Cardiac septum (tissue), 1 donor: ENCODE measurements at regions of chr2 and their contacts with region 1.

Region 1: DNA sequence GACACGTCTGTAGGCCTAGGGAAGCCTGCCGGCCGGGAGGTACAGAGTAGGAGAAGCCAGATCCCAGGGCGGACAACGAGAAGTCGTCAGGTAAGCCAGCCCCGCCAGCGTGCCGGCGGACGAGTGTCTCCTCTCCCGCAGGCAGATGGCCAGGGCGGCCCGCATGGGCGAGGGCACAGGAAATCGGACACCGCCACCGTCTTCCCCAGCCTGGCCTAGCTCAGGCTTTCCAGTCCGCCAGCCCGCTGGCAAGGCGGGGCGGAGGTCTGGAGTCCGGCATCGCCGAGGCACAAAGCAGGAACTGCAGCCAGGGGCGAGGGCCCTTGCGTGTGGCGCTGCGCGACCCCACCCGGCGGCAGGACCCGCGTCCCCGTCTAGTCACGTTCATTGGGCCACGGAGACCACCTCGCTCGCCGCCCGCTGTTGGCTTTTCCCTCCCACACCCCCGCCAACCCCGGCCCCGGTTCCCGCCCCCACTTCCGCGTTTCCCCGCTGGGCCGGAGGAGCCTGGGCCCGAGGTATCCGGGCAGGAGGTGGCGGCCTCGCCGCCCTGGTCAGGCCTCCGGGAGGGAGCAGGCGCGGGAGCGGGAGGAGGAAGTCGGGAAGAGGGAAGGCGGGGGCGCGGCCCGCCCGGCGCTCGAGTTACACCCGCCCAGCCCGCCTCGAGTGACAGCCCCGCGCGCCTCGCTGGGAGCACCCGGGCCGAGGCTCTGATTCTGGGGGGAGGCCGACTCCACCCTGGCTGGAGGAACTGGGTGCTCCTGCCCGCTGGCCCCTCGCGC is at the start of gene GPD2:
- DNase-seq: peak; percentile 96
- total RNA-seq, gene GPD2: 12.6 TPM

Region 2: GRCh38 chr2:156332534-156333273 is 103.2 kb before region 1 on chr2 and contains the start of gene NR4A2:
- intact Hi-C with region 1: loop called (anchors 1 kb)
- DNase-seq: peak; percentile 95
- total RNA-seq, gene NR4A2: 1.1 TPM

Region 3: GRCh38 chr2:156341452-156342253 is 94.3 kb before region 1 on chr2:
- intact Hi-C with region 1: loop called (anchors 2 kb)
- DNase-seq: peak; percentile 94

Region 4: DNA sequence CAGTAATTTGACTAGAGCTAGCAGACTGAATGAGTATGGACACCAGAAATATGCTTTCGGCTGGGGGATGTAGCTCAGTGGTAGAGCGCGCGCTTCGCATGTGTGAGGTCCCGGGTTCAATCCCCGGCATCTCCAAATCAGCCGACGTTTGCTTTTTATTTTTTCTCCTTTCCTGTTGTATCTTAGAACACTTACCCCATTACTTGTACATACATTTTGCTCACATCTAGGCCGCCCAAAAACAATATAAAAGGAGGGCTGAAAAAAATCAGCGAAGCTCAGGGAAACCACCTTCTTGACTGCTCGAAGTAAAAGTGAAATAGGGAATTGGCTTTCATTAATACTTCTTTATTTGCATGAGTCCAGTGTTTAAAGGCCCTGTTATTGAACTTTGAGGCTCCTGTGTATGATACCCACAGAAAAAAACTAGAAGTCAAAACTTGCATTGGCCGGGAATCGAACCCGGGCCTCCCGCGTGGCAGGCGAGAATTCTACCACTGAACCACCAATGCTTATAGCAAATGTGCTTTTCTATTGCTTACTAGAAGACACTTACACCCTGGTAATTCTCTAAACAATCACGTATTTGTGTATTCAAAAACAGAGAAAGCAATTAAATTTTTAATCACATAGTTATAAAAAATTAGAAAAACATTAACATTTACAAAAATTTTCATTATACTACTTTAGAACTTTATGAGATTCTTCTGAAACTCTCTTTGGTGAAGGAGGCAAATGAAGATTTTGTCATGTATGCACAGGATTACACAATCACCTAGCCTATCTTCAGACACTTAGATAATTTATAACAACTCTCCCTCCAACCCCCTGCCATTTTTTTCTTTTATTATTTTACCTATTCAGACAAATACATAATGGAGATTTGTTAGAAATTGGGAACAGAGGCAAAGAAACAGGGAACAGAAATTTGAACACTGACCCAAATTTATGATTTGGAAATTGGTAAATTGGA is 34.9 kb before region 1 on chr2:
- intact Hi-C with region 1: loop called (anchors 1 kb)
- DNase-seq: peak; percentile 78

Region 5: GRCh38 chr2:156448766-156449165 is 12.9 kb after region 1 on chr2:
- intact Hi-C with region 1: loop called (anchors 2 kb)
- DNase-seq: no peak

Region 6: GRCh38 chr2:156457523-156458517 is 21.9 kb after region 1 on chr2:
- intact Hi-C with region 1: loop called (anchors 2 kb)
- DNase-seq: no peak

Region 7: GRCh38 chr2:156573710-156574109 is 137.8 kb after region 1 on chr2:
- intact Hi-C with region 1: no loop called
- DNase-seq: no peak

Region 8: GRCh38 chr2:156589381-156590079 is 153.6 kb after region 1 on chr2:
- intact Hi-C with region 1: loop called (anchors 10 kb)
- DNase-seq: no peak

Region 9: GRCh38 chr2:156845806-156846558 is 410.1 kb after region 1 on chr2:
- intact Hi-C with region 1: no loop called
- DNase-seq: no peak